CD4-positive, alpha-beta memory T cell (primary cell): ENCODE measurements at regions of chr12 and their contacts with region 1.

Region 1: DNA sequence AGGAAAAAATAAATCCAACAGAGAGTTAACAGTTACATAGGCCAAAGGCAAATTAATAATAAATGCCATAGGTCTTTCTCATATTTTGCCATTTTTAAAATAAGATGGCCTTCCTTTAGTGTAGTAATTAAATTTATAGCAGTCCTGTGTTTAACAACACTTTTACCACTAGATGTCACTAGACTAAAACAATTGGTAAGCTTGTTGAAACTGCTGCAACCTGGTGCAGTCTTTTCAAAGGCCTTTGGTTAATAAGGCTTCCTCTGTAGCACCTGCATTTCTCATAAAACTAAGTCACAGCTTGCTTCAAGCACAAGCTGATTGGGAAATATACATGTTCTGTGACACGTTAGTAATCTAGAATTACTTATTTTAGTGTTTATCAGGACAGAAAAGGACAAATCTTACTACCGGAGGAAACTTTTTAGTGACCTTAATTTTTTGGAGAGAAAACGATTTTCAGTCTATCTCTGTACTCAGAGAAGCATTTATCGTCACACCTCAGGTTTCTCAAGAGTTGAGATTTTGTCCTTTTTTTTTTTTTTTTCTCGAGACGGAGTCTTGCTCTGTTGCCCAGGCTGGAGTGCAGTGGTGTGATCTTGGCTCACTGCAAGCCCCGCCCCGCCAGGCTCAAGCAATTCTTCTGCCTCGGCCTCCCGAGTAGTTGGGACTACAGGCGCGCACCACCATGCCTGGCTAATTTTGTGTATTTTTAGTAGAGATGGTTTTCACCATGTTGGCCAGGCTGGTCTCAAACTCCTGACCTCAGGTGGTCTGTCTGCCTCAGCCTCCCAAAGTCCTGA is 20.0 kb downstream of the BORCS5 start:
- DNase-seq: peak; percentile 62 to 82 (median 81)
- H3K4me3 ChIP-seq: no peak overlapping the region
- H3K4me3 Mint-ChIP-seq: peak overlapping the region in 1 of 8 donors; percentile 41
- H3K27ac ChIP-seq: peak overlapping the region; percentile 23
- H3K27ac Mint-ChIP-seq: peak overlapping the region; percentile 52 to 99 (median 91)
- H3K4me1 ChIP-seq: peaks cover 50% of the 10 kb centered on the region
- H3K4me1 Mint-ChIP-seq: peaks cover 36 to 48% (median 43%) of the 10 kb centered on the region in 4 donors
- H3K27me3 ChIP-seq: no peaks in the 10 kb centered on the region
- H3K27me3 Mint-ChIP-seq: no peaks in the 10 kb centered on the region

Region 2: DNA sequence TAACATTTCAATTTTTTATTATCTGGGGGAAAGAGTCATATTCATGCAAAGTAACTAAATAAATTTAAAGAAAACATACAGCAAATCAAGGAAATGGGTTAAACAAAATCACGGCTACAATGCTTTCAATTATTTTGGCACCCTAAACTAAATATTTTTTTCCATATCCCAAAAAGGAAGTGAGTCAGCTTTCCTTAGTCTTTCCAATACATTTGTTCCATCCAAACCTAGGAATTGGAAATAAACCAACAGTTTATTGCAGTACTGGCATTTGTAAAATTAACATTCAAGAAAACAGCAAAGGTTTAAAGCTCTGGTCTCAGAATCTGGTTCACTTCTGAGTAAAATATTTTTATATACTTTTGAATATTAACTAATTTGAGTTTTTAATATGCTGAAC is 216.9 kb before region 1 on chr12:
- CTCF ChIA-PET with region 1: no interaction called
- POLR2A ChIA-PET with region 1: no interaction called
- intact Hi-C with region 1: no loop called
- DNase-seq: no peak
- H3K4me3 ChIP-seq: no peak overlapping the region
- H3K4me3 Mint-ChIP-seq: no peak overlapping the region
- H3K27ac ChIP-seq: no peak overlapping the region
- H3K27ac Mint-ChIP-seq: no peak overlapping the region
- H3K4me1 ChIP-seq: no peaks in the 10 kb centered on the region
- H3K4me1 Mint-ChIP-seq: no peaks in the 10 kb centered on the region
- H3K27me3 ChIP-seq: no peaks in the 10 kb centered on the region
- H3K27me3 Mint-ChIP-seq: no peaks in the 10 kb centered on the region

Region 3: DNA sequence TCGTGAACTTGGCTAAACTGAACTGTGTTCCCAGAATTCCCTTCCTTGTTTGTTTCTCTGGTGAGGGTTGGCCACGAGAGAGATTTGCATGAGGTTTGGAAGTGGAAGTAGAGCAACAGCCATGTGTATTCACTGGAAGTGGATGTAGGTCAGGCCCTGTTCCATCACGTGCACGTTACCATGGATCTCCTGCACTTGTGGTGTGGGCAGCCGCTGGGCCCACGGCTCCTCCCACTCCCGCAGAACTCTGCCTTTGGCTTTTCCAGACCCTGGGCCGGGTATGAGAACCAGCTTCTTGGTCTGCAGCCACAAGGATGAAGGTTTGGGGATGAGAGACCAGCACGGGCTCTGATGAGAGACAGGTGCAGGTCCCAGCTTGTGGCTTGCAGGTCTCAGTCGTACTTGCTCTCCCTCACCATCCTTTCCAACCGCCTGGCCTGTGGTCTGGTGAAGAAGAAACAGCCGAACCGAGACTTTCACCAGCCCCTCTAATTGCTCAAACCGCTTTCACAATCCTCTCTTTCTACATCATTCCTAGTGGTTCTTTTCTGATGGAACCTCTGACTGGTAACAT is 90.9 kb after region 1 on chr12:
- CTCF ChIA-PET with region 1: interaction called, 100 read pairs
- POLR2A ChIA-PET with region 1: interaction called, 111 read pairs
- intact Hi-C with region 1: no loop called
- DNase-seq: peak; percentile 76 to 88 (median 85)
- H3K4me3 ChIP-seq: peak overlapping the region in 1 of 2 donors; percentile 12
- H3K4me3 Mint-ChIP-seq: peak overlapping the region; percentile 52 to 83 (median 62)
- H3K27ac ChIP-seq: peak overlapping the region; percentile 82
- H3K27ac Mint-ChIP-seq: peak overlapping the region; percentile 98 to 100 (median 99)
- H3K4me1 ChIP-seq: peaks cover 78% of the 10 kb centered on the region
- H3K4me1 Mint-ChIP-seq: peaks cover 55 to 90% (median 76%) of the 10 kb centered on the region in 4 donors
- H3K27me3 ChIP-seq: no peaks in the 10 kb centered on the region
- H3K27me3 Mint-ChIP-seq: no peaks in the 10 kb centered on the region

Region 4: DNA sequence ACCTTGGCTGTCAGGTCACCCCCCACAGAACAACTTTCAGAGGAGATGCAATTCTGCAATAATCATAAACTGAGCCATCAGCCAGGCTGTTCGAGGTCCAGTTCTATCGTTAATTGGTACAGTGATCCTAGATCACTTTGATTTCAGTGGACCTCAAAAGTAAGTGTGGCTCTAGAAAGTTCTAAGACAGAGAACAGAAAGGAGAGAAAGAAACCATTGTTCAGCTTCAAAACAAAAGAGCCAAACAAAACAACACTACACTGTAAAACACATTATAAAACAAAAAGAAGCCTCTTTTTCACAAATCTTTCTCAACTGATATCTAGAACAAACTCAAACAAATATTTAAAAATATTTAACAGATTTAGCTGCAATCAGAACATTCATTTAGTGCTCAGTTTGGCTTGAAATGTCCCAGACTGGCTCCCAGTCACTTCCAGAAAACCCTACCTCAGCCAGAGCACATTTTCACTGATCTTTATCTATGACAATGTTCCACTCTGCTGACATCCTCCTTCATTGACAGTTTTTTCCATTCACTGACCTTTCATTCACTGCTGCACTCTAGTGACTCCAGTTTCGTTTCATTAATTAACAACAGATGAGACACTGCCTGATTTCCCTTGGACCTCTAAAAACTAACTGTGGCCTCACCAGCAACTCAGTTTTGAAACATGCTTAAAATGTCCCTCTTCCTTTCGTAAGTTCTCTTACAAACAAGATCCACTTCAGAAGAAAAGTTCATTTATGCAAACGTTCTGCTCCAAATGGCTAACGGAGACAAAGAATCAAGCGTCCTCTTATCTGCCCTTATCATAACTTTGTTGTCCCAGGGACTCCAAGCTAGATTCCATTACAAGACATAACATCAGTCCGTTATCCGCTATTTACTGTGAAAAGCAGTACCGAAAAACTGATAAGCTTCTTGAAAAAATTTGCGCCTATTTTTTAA is 129.0 kb after region 1 on chr12:
- CTCF ChIA-PET with region 1: interaction called, 74 read pairs
- POLR2A ChIA-PET with region 1: interaction called, 20 read pairs
- intact Hi-C with region 1: loop called (anchors 1 kb)
- DNase-seq: peak in 4 of 5 donors; percentile 28 to 42 (median 32)
- H3K4me3 ChIP-seq: no peak overlapping the region
- H3K4me3 Mint-ChIP-seq: peak overlapping the region in 7 of 8 donors; percentile 37 to 84 (median 73)
- H3K27ac ChIP-seq: peak overlapping the region; percentile 48
- H3K27ac Mint-ChIP-seq: peak overlapping the region; percentile 66 to 95 (median 90)
- H3K4me1 ChIP-seq: peaks cover 65% of the 10 kb centered on the region
- H3K4me1 Mint-ChIP-seq: peaks cover 53 to 77% (median 61%) of the 10 kb centered on the region in 4 donors
- H3K27me3 ChIP-seq: no peaks in the 10 kb centered on the region
- H3K27me3 Mint-ChIP-seq: no peaks in the 10 kb centered on the region

Region 5: DNA sequence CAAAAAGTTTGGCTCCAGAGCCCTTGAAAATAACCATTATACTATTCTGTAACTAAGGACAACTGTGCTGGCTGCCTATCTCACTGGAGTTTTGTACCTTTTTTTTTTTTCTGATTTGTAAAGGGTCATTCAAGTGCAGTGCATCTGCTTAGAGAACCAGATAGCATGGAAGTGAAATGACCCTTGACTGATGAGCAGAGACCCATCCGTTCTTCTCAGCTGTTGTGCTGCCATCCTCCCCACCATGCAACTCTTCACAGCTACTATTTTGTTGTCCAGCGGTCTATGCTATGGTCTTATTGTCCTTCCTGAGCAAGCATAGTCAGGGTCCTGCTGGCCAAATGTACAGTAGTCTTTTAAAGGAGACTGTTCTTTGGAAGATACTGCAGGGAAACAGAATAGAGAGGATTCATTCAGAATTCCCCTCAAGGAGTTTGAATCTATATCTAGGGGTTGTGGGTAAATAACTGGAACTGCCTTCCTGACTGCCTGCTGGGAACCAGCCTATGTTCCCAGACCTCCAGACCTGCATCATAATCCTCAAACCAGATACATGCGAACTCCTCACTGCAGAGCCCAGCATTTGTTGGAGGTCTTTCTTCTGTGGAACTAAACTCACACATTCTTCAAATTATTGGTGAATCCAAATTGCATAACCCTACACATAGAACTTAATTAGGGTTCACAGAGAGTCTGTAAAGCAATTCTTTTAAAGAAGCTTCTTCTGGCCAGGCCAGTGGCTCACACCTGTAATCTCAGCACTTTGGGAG is 278.0 kb after region 1 on chr12:
- CTCF ChIA-PET with region 1: interaction called, 75 read pairs
- POLR2A ChIA-PET with region 1: interaction called, 27 read pairs
- intact Hi-C with region 1: loop called (anchors 1 kb)
- DNase-seq: no peak
- H3K4me3 ChIP-seq: no peak overlapping the region
- H3K4me3 Mint-ChIP-seq: no peak overlapping the region
- H3K27ac ChIP-seq: no peak overlapping the region
- H3K27ac Mint-ChIP-seq: peak overlapping the region in 2 of 7 donors; percentile 70 to 79
- H3K4me1 ChIP-seq: peaks cover 13% of the 10 kb centered on the region
- H3K4me1 Mint-ChIP-seq: peaks cover 13 to 19% (median 14%) of the 10 kb centered on the region in 4 donors
- H3K27me3 ChIP-seq: no peaks in the 10 kb centered on the region
- H3K27me3 Mint-ChIP-seq: no peaks in the 10 kb centered on the region

Region 6: DNA sequence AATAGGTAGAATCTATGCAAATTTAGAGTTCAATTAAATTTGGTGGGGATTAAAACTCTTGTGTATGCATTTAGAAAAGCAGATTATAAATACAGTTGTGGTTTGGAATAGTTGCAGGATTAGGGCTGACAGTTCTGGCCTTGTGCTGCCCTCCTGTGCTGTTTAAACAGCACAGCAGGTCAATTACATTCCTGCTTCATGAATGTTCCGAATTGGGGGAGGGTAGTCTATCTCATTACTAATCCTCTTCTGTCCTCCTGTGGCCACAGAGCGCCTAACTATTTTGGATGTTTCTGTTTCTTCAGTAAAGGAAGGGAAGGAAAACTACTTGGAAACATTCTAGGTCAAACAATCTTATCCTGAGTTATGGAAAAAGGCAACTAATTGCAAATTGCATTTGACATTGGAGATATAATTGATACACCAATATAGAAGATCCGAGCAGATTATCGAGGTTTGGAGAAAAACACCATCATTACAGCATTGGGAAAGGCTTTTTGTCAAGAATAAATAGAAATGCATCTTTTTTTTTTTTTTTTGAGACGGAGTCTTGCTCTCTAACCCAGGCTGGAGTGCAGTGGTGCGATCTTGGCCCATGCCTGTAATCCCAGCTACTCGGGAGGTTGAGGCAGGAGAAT is 327.9 kb after region 1 on chr12:
- CTCF ChIA-PET with region 1: interaction called, 27 read pairs
- POLR2A ChIA-PET with region 1: no interaction called
- intact Hi-C with region 1: loop called (anchors 2 kb)
- DNase-seq: peak in 4 of 5 donors; percentile 36 to 58 (median 48)
- H3K4me3 ChIP-seq: no peak overlapping the region
- H3K4me3 Mint-ChIP-seq: peak overlapping the region in 6 of 8 donors; percentile 2 to 84 (median 36)
- H3K27ac ChIP-seq: no peak overlapping the region
- H3K27ac Mint-ChIP-seq: peak overlapping the region in 5 of 7 donors; percentile 50 to 88 (median 73)
- H3K4me1 ChIP-seq: peaks cover 37% of the 10 kb centered on the region
- H3K4me1 Mint-ChIP-seq: peaks cover 14 to 32% (median 20%) of the 10 kb centered on the region in 4 donors
- H3K27me3 ChIP-seq: no peaks in the 10 kb centered on the region
- H3K27me3 Mint-ChIP-seq: no peaks in the 10 kb centered on the region

Region 7: GRCh38 chr12:12736759-12737676 is 360.2 kb after region 1 on chr12:
- CTCF ChIA-PET with region 1: interaction called, 150 read pairs
- POLR2A ChIA-PET with region 1: interaction called, 66 read pairs
- intact Hi-C with region 1: loop called (anchors 1 kb)
- DNase-seq: peak; percentile 61 to 70 (median 64)
- H3K4me3 ChIP-seq: peak overlapping the region in 1 of 2 donors; percentile 46
- H3K4me3 Mint-ChIP-seq: peak overlapping the region; percentile 67 to 88 (median 76)
- H3K27ac ChIP-seq: peak overlapping the region; percentile 76
- H3K27ac Mint-ChIP-seq: peak overlapping the region; percentile 88 to 93 (median 93)
- H3K4me1 ChIP-seq: peaks cover 55% of the 10 kb centered on the region
- H3K4me1 Mint-ChIP-seq: peaks cover 24 to 59% (median 41%) of the 10 kb centered on the region in 4 donors
- H3K27me3 ChIP-seq: no peaks in the 10 kb centered on the region
- H3K27me3 Mint-ChIP-seq: no peaks in the 10 kb centered on the region